Posterior cingulate gyrus (tissue), 11 donors: ENCODE measurements at regions of chr16 and their contacts with region 1.

Region 1: GRCh38 chr16:75385507-75386152 is 47.7 kb downstream of the CFDP1 start:
- DNase-seq: no peak

Region 2: DNA sequence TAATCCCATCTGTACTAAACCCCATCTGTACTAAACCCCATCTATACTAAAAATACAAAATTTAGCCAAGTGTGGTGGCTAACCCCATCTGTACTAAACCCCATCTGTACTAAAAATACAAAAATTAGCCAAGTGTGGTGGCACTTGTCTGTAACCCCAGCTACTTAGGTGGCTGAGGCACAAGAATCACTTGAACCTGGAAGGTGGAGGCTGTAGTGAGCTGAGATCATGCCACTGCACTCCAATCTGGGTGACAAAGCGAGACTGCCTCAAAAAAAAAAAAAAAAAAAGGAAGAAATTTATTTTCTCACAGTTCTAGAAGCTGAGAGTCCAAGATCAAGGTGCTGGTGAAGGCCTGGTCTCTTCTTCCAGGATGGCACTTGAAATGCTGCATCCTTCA is 225.2 kb before region 1 on chr16:
- intact Hi-C with region 1: no loop called
- DNase-seq: no peak

Region 3: GRCh38 chr16:75198135-75198600 is 187.5 kb before region 1 on chr16:
- intact Hi-C with region 1: loop called (anchors 1 kb)
- DNase-seq: peak in 2 of 10 donors; percentile 39 to 59

Region 4: DNA sequence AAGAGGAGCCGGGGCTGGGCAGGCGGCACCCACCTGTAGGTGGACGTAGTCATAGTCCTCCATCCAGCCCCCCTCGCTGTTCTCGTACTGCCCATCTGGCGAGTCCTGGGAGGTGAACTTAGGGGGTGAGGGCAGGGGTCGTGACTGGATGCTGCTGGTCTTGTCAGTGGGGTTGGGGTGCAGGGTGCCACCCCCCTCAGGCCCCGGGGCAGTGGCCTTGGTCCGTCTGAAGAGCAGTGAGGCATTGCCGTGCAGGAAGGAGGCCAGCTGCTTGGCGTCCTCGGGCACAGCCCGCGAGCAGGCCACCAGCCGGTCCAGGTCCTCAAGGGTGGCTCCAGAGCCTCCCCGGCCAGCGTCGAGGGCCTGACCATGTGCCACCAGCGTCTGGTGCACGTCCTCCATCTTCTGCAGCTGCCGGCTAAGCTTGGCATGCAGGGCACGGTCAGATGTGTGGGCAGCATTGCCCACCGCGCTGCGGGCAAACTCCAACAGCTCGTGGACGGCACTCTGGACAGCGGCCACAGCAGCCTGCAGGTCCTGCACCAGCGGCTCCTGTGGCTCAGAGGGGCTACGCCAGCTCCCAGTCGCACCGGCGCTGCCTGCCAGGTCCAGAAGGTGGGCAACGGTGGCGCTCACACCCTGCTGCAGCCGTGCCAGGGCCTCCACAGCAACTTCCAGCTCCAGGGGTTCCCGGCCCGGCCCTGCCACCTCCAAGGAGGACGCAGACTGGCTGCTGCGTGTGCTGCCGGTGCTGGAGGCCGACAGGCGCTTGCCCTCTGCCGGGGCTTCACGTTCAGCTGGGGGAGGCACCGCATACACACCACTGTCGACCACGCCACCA is 150.6 kb before region 1 on chr16:
- intact Hi-C with region 1: loop called (anchors 1 kb)
- DNase-seq: peak in 1 of 10 donors; percentile 87

Region 5: GRCh38 chr16:75319513-75320411 is 65.9 kb before region 1 on chr16:
- intact Hi-C with region 1: loop called (anchors 10 kb)
- DNase-seq: no peak

Region 6: GRCh38 chr16:75464130-75464918 is 78.7 kb after region 1 on chr16 and contains the start of gene TMEM170A:
- intact Hi-C with region 1: no loop called
- DNase-seq: peak; percentile 97 to 100 (median 99)